ENCODE measurements at regions of chr19 and their contacts with region 1.

Region 1: DNA sequence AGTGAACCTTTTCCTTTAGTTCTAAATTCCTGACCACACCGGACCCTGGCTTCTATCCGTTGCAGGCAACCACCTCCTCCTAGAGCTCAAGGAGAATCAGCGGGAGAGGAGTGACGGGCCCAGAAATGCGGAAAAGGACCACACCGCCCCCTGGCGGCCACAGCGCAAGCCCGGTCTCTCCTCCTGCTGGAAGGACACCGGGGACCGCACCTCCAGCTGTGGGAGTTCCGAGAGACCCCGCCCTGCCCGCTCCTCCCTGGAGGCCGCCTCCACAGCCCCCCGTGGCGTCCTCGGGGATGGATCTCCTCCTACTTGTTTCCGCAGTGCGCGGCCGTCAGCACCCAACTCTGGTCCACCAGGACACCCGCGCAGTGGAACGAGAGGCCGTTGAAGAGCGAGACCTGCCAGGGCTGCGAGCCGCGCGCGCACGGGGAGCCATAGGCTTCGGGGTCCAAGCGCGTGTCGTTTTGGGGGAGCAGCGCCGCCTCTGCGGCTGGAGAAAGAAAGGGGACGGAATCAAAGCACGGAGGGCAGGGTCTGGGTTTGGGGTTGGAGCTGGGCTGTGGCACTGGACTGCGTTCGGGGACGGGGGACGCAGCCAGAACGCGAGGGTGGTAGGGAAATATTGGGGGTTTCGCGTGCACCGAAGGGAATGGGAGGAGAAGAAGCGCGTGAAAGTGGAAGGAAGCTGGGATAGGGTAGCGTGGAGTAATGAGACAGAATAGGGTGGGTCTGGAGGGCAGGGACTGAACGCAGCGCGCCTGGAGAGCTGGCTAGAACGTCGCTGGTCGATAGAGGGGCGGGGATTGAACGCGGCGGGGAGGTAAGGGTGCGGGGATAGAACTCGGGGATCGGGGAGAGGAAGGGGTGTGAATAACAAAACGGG is 2.5 kb downstream of the KLK10 start:
- DNase-seq: peak; percentile 92
- ATAC-seq: peak; percentile 62
- H3K4me3 Mint-ChIP-seq: peak overlapping the region; percentile 89
- H3K27ac Mint-ChIP-seq: no peak overlapping the region
- H3K4me1 Mint-ChIP-seq: peaks cover 16% of the 10 kb centered on the region
- H3K27me3 Mint-ChIP-seq: peaks cover 56% of the 10 kb centered on the region
- CTCF ChIP-seq: peak; percentile 81

Region 2: DNA sequence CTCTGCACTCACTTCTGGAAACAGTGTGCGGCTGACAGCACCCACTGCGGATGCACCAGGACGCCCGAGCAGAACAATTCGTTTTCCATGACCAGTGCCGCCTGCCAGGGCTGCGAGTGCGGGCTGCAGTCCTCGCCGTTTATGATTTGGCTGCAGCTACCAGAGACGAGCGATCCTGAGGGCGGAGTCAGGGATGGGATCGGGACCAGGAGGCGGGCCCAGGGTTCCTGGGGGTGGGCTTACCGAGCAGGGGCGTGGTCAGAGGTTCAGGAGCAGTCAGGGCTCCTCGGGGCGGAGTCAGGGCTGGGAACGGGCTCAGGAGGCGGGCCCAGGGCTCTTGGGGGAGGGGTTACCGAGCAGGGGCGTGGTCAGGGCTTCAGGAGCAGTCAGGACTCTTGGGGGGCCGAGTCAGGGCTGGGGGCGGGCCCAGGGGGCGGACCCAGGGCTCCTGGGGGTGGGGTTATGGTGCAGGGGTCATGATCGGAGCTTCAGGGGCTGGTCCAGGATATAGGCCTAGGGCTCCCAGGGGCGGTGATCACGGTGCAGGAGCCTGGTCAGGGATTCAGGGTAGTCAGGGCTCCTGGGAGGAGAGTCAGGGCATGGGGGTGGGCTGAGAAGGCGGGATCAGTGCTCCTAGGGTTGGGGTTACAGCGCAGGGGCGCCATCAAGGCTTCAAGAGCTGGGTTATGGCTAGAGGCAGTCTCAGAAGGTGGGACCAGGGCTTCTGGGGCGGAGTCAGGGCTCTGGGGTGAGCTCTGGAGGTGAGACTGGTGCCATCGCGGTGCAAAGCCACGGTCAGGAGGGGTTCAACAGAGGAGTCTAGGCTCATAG is 107.6 kb before region 1 on chr19:
- CTCF ChIA-PET with region 1: interaction called, 44 read pairs
- POLR2A ChIA-PET with region 1: interaction called, 4 read pairs
- DNase-seq: peak; percentile 100
- ATAC-seq: peak; percentile 92
- H3K4me3 Mint-ChIP-seq: peak overlapping the region; percentile 78
- H3K27ac Mint-ChIP-seq: peak overlapping the region; percentile 36; the same call in 1 of the 2 replicates
- H3K4me1 Mint-ChIP-seq: peaks cover 20% of the 10 kb centered on the region
- H3K27me3 Mint-ChIP-seq: peaks cover 23% of the 10 kb centered on the region
- CTCF ChIP-seq: no peak

Region 3: DNA sequence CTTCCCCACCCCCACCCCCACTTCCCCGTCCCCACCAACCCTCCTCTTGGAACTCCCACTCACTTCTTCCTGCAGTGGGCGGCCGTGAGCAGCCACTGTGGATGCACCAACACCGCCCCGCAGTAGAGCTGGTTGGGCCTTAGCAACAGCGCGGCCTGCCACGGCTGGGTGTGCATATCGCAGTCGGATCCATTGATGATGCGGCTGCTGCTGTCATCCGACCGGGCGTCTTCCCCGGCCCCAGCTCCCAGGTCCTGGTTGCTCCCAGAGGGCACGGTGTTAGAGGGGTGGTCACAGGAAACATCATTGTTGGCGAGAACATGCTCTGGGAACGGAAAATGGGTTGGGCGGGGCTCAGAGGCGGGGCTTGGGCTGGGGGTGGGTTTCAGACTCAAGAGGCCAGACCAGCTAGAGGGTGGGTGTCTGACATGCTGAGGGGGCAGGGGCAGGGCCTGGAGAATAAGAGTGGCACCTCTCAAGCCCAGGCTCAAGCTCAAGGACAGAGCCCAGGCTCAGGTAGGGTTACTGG is 67.2 kb before region 1 on chr19:
- CTCF ChIA-PET with region 1: interaction called, 17 read pairs
- POLR2A ChIA-PET with region 1: no interaction called
- DNase-seq: peak; percentile 21
- ATAC-seq: no peak; the same call in 1 of the 2 replicates
- H3K4me3 Mint-ChIP-seq: no peak overlapping the region
- H3K27ac Mint-ChIP-seq: no peak overlapping the region
- H3K4me1 Mint-ChIP-seq: peaks cover 13% of the 10 kb centered on the region
- H3K27me3 Mint-ChIP-seq: peaks cover 14% of the 10 kb centered on the region
- CTCF ChIP-seq: no peak

Region 4: GRCh38 chr19:51002542-51003171 is 14.4 kb before region 1 on chr19:
- CTCF ChIA-PET with region 1: interaction called, 94 read pairs
- POLR2A ChIA-PET with region 1: no interaction called
- DNase-seq: peak; percentile 97
- ATAC-seq: peak; percentile 81
- H3K4me3 Mint-ChIP-seq: peak overlapping the region; percentile 67
- H3K27ac Mint-ChIP-seq: peak overlapping the region; percentile 93
- H3K4me1 Mint-ChIP-seq: peaks cover 24% of the 10 kb centered on the region
- H3K27me3 Mint-ChIP-seq: peaks cover 52% of the 10 kb centered on the region
- CTCF ChIP-seq: no peak

Region 5: DNA sequence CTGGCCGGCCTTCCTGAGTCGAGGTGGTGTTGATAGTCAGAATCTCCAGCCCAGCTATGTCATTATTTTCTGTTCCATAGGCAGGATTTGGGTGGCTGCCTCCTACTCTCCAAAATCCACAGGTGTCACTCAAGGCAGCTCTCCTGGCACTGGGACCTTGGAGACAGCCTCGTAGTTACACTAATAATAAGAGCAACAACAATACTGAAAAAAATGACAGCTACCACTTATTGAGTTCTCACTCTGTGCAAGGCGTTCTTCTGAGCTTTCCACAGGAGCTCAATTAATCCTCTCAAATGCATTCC is 29.9 kb after region 1 on chr19:
- CTCF ChIA-PET with region 1: interaction called, 82 read pairs
- POLR2A ChIA-PET with region 1: interaction called, 4 read pairs
- DNase-seq: no peak
- ATAC-seq: no peak
- H3K4me3 Mint-ChIP-seq: peak overlapping the region; percentile 40; the same call in 1 of the 2 replicates
- H3K27ac Mint-ChIP-seq: peak overlapping the region; percentile 99
- H3K4me1 Mint-ChIP-seq: peaks cover 57% of the 10 kb centered on the region
- H3K27me3 Mint-ChIP-seq: no peaks in the 10 kb centered on the region
- CTCF ChIP-seq: no peak

Region 6: DNA sequence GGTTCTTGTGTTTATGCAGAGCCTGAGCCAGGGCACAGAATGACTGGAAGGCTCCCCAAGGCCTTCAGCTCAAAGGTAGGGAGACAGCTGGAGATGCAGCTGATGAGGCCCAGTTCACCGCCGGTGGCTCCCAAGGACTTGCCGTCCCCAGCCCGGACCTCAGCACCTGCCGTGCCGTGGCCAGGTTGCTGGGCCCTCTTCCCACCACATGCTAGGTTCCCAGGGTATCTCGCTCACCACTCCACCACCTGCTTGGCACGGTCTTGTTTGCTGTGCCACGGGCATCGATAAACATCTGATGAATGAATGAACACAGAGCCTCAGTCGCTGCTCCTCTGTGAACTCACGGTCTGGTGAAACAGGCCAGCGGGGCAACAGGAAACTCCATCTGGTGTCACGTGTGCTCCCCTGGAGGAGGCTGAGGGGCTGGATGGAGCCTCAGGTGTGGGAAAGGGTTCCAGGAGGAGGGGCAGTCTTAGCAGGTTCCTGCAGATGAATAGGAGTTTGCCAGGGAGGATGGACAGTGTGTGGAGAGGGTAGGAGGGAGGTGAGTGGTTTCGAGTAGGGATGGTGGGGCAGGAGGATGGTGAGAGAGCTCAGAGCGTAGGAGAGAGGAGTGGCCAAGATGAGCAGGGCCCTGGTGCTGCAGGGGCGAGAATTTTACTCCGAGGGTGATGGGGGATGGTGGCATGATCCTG is 69.3 kb after region 1 on chr19:
- CTCF ChIA-PET with region 1: interaction called, 347 read pairs
- POLR2A ChIA-PET with region 1: interaction called, 4 read pairs
- DNase-seq: no peak
- ATAC-seq: no peak
- H3K4me3 Mint-ChIP-seq: no peak overlapping the region
- H3K27ac Mint-ChIP-seq: 0 out of 2 replicates have a peak overlapping the region, but pooled peaks have one; percentile 63
- H3K4me1 Mint-ChIP-seq: peaks cover 20% of the 10 kb centered on the region
- H3K27me3 Mint-ChIP-seq: no peaks in the 10 kb centered on the region
- CTCF ChIP-seq: no peak